Activated CD8-positive, alpha-beta T cell treated with anti-CD3 and anti-CD28 coated beads for 36 hours (primary cell): ENCODE measurements at regions of chr11 and their contacts with region 1.

Region 1: DNA sequence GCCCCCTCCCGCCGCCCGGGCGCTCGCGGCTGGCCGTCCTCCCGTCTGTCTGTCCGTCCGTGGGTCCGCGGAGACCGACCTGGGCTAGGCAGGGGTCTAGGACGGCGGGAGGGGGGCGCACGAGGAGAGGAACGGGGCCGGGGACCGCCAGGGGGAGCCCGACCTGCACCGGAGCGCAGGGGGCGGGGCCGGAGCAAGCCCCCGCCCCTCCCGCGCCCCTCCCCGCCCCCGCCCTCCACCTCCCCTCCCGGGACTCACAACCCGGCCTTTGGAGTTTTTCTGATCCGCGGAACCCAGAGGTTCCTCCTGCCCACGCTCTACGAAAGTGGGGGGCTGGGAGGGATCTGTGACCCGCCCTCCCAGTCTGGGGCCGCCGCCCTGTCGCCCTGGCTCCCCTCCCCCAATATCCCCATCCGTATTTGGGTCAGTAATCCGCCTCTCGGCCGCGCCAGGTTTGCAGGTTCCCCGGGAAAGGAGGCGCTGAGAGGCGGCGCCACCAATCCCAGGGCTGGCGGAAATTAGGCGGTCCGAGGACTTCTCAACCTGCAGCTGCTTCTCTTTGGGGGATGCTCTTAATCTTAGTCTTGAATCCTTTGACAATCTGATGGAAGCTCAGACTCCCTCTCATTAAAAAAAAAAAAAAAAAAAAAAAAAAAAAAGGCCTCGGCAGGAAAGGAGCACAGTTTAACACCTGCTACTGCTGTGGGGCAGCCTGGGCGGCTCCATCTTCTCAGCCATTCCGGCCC is 925 bp upstream of the KCNJ11 start:
- DNase-seq: peak; percentile 82
- ATAC-seq: peak; percentile 84
- H3K4me3 Mint-ChIP-seq: peak overlapping the region; percentile 69
- H3K27ac Mint-ChIP-seq: peak overlapping the region; percentile 9
- H3K4me1 Mint-ChIP-seq: peaks cover 4% of the 10 kb centered on the region
- H3K27me3 Mint-ChIP-seq: peaks cover 2% of the 10 kb centered on the region
- CTCF ChIP-seq: peak; percentile 78

Region 2: GRCh38 chr11:17343907-17344306 is 45.5 kb before region 1 on chr11:
- CTCF ChIA-PET with region 1: no interaction called
- POLR2A ChIA-PET with region 1: no interaction called
- intact Hi-C with region 1: no loop called
- DNase-seq: peak; percentile 85
- ATAC-seq: peak; percentile 98
- H3K4me3 Mint-ChIP-seq: no peak overlapping the region
- H3K27ac Mint-ChIP-seq: peak overlapping the region; percentile 28
- H3K4me1 Mint-ChIP-seq: peaks cover 17% of the 10 kb centered on the region
- H3K27me3 Mint-ChIP-seq: no peaks in the 10 kb centered on the region
- CTCF ChIP-seq: no peak

Region 3: DNA sequence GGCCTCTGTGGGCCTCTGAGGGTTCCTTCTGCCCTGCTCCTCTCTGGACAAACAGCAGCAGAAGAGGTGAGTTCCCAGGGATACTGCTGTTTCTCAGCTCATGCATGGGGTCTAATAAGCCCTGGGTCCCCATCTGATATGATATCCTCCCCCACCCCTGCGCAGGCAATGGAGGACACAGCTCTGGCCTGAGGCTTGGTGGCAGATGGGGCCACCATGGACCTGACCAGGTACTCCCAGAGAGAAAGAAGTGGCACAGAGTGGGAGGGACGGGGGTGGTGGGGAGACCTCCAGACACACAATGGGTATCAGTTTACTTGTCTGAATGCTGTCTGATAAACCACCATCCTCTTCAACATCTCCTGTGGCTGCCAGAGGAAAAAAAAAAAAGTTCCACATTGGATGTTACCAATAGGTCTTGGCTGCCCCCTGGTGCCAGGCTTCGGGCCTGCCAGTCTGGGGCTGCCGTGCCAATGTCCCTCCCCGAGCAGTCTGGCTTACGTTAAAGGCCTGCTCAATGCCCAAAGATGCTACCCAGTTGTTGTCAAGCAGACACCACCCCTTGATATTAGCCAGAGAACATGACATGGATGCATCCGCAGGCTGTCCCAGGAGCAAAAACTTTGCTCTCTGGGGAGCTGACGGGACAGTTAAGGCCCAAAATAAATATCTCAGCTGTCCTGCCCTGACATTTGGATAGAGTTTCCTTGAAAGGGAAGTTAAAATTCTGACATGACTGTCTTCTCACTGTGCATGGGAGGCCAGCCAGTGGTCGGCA is 115.1 kb after region 1 on chr11:
- CTCF ChIA-PET with region 1: interaction called, 167 read pairs
- POLR2A ChIA-PET with region 1: no interaction called
- intact Hi-C with region 1: loop called (anchors 1 kb)
- DNase-seq: peak; percentile 87
- ATAC-seq: peak; percentile 91
- H3K4me3 Mint-ChIP-seq: no peak overlapping the region
- H3K27ac Mint-ChIP-seq: no peak overlapping the region
- H3K4me1 Mint-ChIP-seq: no peaks in the 10 kb centered on the region
- H3K27me3 Mint-ChIP-seq: peaks cover 7% of the 10 kb centered on the region
- CTCF ChIP-seq: peak; percentile 86